CD14-positive monocyte (primary cell): ENCODE measurements at regions of chr3 and their contacts with region 1.

Region 1: DNA sequence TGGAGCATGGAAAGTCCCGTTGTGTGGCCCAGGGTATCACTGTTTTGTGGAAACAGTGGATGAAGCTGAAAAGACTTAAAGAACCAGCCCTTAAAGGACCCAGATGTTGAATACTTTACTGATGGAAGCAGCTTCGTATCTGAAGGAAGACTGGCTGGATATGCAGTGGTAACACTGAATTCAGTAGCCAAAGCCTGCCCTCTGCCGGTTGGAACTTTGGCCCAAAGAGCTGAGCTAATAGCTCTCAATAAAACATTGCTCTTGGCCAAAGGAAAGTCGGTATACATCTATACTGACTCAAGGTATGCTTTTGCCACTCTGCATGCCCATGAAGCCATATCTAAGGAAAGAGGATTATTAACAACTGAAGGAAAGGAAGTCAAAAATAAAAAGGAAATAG is 885.4 kb downstream of the PDCD6IP start:
- DNase-seq: peak in 1 of 3 donors; percentile 10
- H3K4me3 ChIP-seq: no peak overlapping the region
- H3K4me3 Mint-ChIP-seq: peak overlapping the region in 1 of 2 donors; percentile 0
- H3K27ac ChIP-seq: no peak overlapping the region
- H3K27ac Mint-ChIP-seq: peak overlapping the region in 1 of 7 donors; percentile 73
- H3K4me1 ChIP-seq: peaks cover 0 to 6% of the 10 kb centered on the region in 2 donors
- H3K4me1 Mint-ChIP-seq: peaks cover 8% of the 10 kb centered on the region
- H3K27me3 ChIP-seq: no peaks in the 10 kb centered on the region
- H3K27me3 Mint-ChIP-seq: no peaks in the 10 kb centered on the region
- CTCF ChIP-seq: peak; percentile 45

Region 2: DNA sequence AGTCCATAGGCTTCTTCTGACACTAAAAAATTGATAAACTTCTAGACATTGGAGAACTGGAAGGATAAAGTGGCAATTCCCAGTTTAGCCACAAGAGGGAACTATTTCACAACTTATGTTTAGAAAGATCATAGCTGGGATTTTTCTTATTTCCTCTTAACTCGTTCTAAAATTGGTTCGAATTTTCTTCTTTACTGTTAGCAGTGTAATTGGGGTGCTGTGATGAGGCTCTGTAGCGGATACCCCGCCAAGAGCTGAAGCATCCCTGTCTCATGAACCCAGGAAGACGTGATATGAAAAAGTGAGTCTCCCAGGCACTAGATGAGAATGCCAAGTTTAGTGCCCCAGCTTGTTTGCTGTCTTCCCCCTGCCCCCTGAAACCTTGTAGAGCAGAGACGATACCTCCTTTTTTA is 800.3 kb before region 1 on chr3:
- intact Hi-C with region 1: loop called in 1 of 2 experiments (anchors 10 kb)
- DNase-seq: peak; percentile 2 to 52 (median 18)
- H3K4me3 ChIP-seq: no peak overlapping the region
- H3K4me3 Mint-ChIP-seq: no peak overlapping the region
- H3K27ac ChIP-seq: no peak overlapping the region
- H3K27ac Mint-ChIP-seq: no peak overlapping the region
- H3K4me1 ChIP-seq: no peaks in the 10 kb centered on the region
- H3K4me1 Mint-ChIP-seq: peaks cover 3% of the 10 kb centered on the region
- H3K27me3 ChIP-seq: no peaks in the 10 kb centered on the region
- H3K27me3 Mint-ChIP-seq: peaks cover 0 to 1% (median 0%) of the 10 kb centered on the region in 3 donors
- CTCF ChIP-seq: peak; percentile 95

Region 3: GRCh38 chr3:34260271-34261006 is 423.4 kb before region 1 on chr3:
- intact Hi-C with region 1: loop called in 1 of 2 experiments (anchors 5 kb)
- DNase-seq: peak; percentile 19 to 35 (median 34)
- H3K4me3 ChIP-seq: no peak overlapping the region
- H3K4me3 Mint-ChIP-seq: no peak overlapping the region
- H3K27ac ChIP-seq: no peak overlapping the region
- H3K27ac Mint-ChIP-seq: no peak overlapping the region
- H3K4me1 ChIP-seq: peaks cover 42 to 44% of the 10 kb centered on the region in 2 donors
- H3K4me1 Mint-ChIP-seq: peaks cover 44% of the 10 kb centered on the region
- H3K27me3 ChIP-seq: no peaks in the 10 kb centered on the region
- H3K27me3 Mint-ChIP-seq: peaks cover 0 to 1% (median 0%) of the 10 kb centered on the region in 3 donors
- CTCF ChIP-seq: peak; percentile 82

Region 4: GRCh38 chr3:34889641-34890040 is 205.8 kb after region 1 on chr3:
- intact Hi-C with region 1: no loop called
- DNase-seq: no peak
- H3K4me3 ChIP-seq: no peak overlapping the region
- H3K4me3 Mint-ChIP-seq: no peak overlapping the region
- H3K27ac ChIP-seq: no peak overlapping the region
- H3K27ac Mint-ChIP-seq: no peak overlapping the region
- H3K4me1 ChIP-seq: no peaks in the 10 kb centered on the region
- H3K4me1 Mint-ChIP-seq: no peaks in the 10 kb centered on the region
- H3K27me3 ChIP-seq: no peaks in the 10 kb centered on the region
- H3K27me3 Mint-ChIP-seq: no peaks in the 10 kb centered on the region
- CTCF ChIP-seq: no peak